Sigmoid colon (tissue), 7 donors: ENCODE measurements at regions of chr22 and their contacts with region 1.

Region 1: GRCh38 chr22:32985899-32986765 is 72.0 kb downstream of the SYN3 start:
- DNase-seq: peak; percentile 86
- H3K4me3 ChIP-seq: no peak overlapping the region
- H3K27ac ChIP-seq: no peak overlapping the region
- H3K4me1 ChIP-seq: peaks cover 0 to 15% (median 11%) of the 10 kb centered on the region in 4 donors
- H3K27me3 ChIP-seq: no peaks in the 10 kb centered on the region
- CTCF ChIP-seq: peak; percentile 83 to 90 (median 88)
- EP300 ChIP-seq: no peak
- POLR2A ChIP-seq: no peak

Region 2: DNA sequence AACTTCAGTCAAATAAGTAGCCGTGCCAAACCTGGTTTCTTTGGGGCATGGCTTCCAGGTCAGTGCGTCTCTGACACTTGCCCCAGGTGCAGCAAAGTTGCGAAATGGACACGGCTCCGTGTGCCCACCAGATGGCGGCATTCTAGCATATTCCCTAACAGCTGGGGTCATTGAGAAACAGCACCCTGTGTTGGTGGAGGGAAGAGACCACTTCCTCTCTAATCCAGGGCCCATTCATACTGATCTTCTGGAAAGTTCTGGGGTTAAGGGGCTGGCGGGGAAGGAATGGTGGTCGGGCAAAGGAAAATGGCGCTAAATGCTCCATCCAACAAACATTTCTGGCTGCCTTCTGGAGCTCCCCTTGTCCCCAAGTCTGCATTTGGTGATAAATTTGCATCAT is 325.8 kb before region 1 on chr22:
- intact Hi-C with region 1: loop called (anchors 2 kb)
- DNase-seq: peak; percentile 84
- H3K4me3 ChIP-seq: no peak overlapping the region
- H3K27ac ChIP-seq: no peak overlapping the region
- H3K4me1 ChIP-seq: peaks cover 0 to 4% (median 0%) of the 10 kb centered on the region in 4 donors
- H3K27me3 ChIP-seq: no peaks in the 10 kb centered on the region
- CTCF ChIP-seq: peak; percentile 48 to 76 (median 67)
- EP300 ChIP-seq: no peak
- POLR2A ChIP-seq: no peak

Region 3: GRCh38 chr22:32803020-32803754 is 182.9 kb before region 1 on chr22:
- intact Hi-C with region 1: loop called (anchors 2 kb)
- DNase-seq: peak; percentile 72
- H3K4me3 ChIP-seq: peak overlapping the region; percentile 75 to 93 (median 78)
- H3K27ac ChIP-seq: peak overlapping the region; percentile 89 to 94 (median 91)
- H3K4me1 ChIP-seq: peaks cover 0 to 55% (median 46%) of the 10 kb centered on the region in 4 donors
- H3K27me3 ChIP-seq: no peaks in the 10 kb centered on the region
- CTCF ChIP-seq: no peak
- EP300 ChIP-seq: no peak
- POLR2A ChIP-seq: no peak

Region 4: GRCh38 chr22:32926600-32926999 is 59.5 kb before region 1 on chr22:
- intact Hi-C with region 1: loop called (anchors 5 kb)
- DNase-seq: no peak
- H3K4me3 ChIP-seq: no peak overlapping the region
- H3K27ac ChIP-seq: no peak overlapping the region
- H3K4me1 ChIP-seq: no peaks in the 10 kb centered on the region
- H3K27me3 ChIP-seq: no peaks in the 10 kb centered on the region
- CTCF ChIP-seq: peak in 3 of 4 experiments; percentile 34 to 59 (median 57)
- EP300 ChIP-seq: no peak
- POLR2A ChIP-seq: no peak

Region 5: GRCh38 chr22:33038131-33038772 is 52.1 kb after region 1 on chr22:
- intact Hi-C with region 1: no loop called
- DNase-seq: no peak
- H3K4me3 ChIP-seq: no peak overlapping the region
- H3K27ac ChIP-seq: no peak overlapping the region
- H3K4me1 ChIP-seq: no peaks in the 10 kb centered on the region
- H3K27me3 ChIP-seq: peaks cover 0 to 29% (median 0%) of the 10 kb centered on the region in 3 donors
- CTCF ChIP-seq: no peak
- EP300 ChIP-seq: no peak
- POLR2A ChIP-seq: no peak